ENCODE measurements at regions of chr11 and their contacts with region 1.

Region 1: GRCh38 chr11:63916837-63917691 is at the start of gene RCOR2:
- DNase-seq: no peak
- H3K4me3 ChIP-seq: peak within 1 kb of the TSS; percentile 57
- H3K27me3 ChIP-seq: peaks cover 2% of the 10 kb centered on the region; the same call in 1 of the 2 replicates
- CTCF ChIP-seq: no peak
- polyA plus RNA-seq, gene RCOR2: 1.6 and 2.5 TPM in 2 replicates

Region 2: GRCh38 chr11:63931045-63931444 is 14.0 kb after region 1 on chr11:
- CTCF ChIA-PET with region 1: interaction called, 11 read pairs
- POLR2A ChIA-PET with region 1: no interaction called
- DNase-seq: no peak
- H3K4me3 ChIP-seq: no peak overlapping the region
- H3K27me3 ChIP-seq: no peaks in the 10 kb centered on the region
- CTCF ChIP-seq: no peak

Measured in BJ (cell line).